Activated CD8-positive, alpha-beta memory T cell treated with anti-CD3 and anti-CD28 coated beads, Interleukin-2, amount 10 ng/mL, durations not matched to agents 7 days and 5 days (primary cell): ENCODE measurements at regions of chr1 and their contacts with region 1.

Region 1: DNA sequence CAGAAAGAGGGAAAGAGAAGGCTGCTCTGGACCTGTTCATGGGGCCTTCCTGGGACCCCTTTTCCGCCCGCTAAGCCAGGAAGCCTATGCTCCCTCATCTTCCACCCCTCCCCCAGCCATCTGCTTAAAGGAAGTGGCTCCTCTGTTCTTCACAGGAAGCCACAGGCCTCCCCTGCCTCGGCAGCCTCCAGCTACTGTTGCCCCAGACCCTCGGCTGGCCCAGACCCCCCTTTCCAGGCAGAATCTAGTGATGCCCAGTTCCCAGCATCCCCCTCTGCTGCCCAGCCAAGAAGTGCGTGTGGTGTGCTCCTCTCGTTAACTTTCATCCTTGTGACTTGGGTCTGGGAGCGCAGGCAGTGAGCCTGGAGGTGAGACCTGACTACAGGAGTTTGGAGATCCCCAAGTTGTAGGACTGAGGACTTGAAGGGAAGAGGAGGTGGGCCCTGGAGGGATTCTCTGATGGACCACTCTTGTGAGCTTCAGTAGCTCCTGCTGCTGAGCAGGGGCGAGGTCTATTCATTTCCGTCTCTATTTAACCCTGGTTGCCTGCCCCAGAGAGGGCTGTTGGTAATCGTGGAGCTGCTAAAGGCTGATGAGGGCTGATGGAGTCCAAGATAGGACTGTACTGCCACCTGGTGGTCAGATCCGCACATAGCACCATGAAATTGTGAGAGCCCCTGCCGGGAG is 9.1 kb downstream of the IFI6 start:
- DNase-seq: peak; percentile 93
- ATAC-seq: peak; percentile 80
- H3K4me3 Mint-ChIP-seq: peak overlapping the region; percentile 68
- H3K27ac Mint-ChIP-seq: peak overlapping the region; percentile 100
- H3K4me1 Mint-ChIP-seq: peaks cover 72% of the 10 kb centered on the region
- H3K27me3 Mint-ChIP-seq: no peaks in the 10 kb centered on the region

Region 2: DNA sequence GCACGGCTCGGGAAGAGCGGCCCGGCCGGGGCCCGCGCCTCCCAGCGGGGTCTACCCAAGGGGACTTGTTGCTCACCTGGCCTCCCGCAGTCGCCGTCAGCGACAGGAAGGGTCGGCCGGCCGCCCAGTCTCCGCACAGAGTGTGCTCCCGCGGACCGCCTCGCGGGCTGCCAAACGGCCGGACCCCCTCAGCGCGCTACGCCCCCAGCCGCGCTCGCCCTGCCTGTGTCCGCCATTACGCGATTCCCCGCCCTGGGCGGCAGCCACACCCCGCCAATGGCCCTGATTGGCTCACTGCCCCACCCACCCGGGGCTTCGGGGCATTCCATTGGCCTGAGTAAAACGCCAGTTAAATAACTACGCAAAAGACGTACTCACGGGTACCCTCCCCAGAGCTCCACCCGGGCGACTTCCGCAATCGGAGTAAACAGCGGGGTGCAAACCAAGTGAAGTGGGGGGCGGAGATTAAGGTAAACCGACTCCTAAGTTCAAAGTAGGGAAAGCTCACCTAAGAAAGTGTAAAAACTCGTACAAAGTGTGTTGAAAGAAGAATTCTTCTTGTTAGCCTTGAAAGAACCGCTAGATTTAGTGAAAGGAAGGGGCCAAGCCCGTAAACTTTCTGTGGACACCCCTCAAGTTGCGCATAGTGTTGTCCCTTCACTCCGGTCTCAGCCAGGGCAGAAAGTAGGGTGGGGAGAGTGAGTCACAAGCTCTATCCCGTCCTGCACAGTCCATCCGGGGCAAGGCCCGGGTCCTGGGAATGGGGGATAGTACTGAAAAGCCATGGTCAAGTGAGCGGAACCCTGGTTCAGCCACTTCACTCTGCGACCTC is 172.7 kb before region 1 on chr1 and contains the start of gene WASF2:
- CTCF ChIA-PET with region 1: interaction called, 15 read pairs
- DNase-seq: peak; percentile 98
- ATAC-seq: peak; percentile 93
- H3K4me3 Mint-ChIP-seq: peak within 1 kb of the TSS; percentile 96
- H3K27ac Mint-ChIP-seq: peak within 1 kb of the TSS; percentile 100
- H3K4me1 Mint-ChIP-seq: peaks cover 31% of the 10 kb centered on the region
- H3K27me3 Mint-ChIP-seq: no peaks in the 10 kb centered on the region
- total RNA-seq, gene WASF2: 113 to 117 TPM

Region 3: GRCh38 chr1:27588256-27589232 is 74.3 kb before region 1 on chr1:
- CTCF ChIA-PET with region 1: no interaction called
- DNase-seq: no peak
- ATAC-seq: no peak
- H3K4me3 Mint-ChIP-seq: no peak overlapping the region
- H3K27ac Mint-ChIP-seq: no peak overlapping the region
- H3K4me1 Mint-ChIP-seq: no peaks in the 10 kb centered on the region
- H3K27me3 Mint-ChIP-seq: no peaks in the 10 kb centered on the region

Region 4: GRCh38 chr1:27603681-27604578 is 58.9 kb before region 1 on chr1 and contains the start of gene AHDC1:
- CTCF ChIA-PET with region 1: interaction called, 536 read pairs
- DNase-seq: peak; percentile 93
- ATAC-seq: peak; percentile 90
- H3K4me3 Mint-ChIP-seq: peak within 1 kb of the TSS; percentile 94
- H3K27ac Mint-ChIP-seq: peak within 1 kb of the TSS; percentile 70
- H3K4me1 Mint-ChIP-seq: peaks cover 37% of the 10 kb centered on the region
- H3K27me3 Mint-ChIP-seq: no peaks in the 10 kb centered on the region
- total RNA-seq, gene AHDC1: 15.8 to 18.5 TPM

Region 5: DNA sequence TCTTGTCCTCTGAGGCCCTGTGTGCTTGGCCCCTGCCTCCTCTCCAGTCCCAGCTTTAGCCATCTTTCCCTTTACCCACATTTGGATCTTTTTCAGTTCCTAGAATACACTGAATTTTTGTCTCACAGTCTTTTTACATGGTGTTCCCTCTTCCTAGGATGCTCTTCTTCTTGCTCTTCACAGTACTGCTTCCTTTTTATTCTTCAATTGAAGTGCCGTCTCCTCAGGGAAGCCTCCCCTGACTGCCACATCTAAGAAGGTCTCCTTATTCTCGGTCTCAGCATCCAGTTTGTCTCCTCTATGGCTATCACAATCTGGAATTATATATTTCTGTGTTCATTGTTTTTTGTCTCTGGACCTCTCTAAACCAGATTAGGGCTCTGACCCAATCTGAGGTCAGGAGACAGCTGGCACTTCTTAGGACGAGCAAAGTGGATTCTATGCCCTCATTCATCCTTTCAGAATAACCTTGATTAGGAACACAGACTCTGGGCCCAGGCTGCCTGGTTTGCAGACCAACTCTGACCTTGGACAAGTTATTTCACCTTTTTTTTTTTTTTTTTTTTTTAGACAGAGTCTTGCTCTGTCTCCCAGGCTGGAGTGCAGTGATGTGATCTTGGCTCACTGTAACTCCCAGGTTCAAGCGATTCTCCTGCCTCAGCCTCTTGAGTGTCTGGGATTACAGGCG is 24.7 kb before region 1 on chr1:
- CTCF ChIA-PET with region 1: interaction called, 32 read pairs
- DNase-seq: no peak
- ATAC-seq: no peak
- H3K4me3 Mint-ChIP-seq: no peak overlapping the region
- H3K27ac Mint-ChIP-seq: no peak overlapping the region
- H3K4me1 Mint-ChIP-seq: peaks cover 37% of the 10 kb centered on the region
- H3K27me3 Mint-ChIP-seq: no peaks in the 10 kb centered on the region

Region 6: GRCh38 chr1:27650539-27651175 is 12.2 kb before region 1 on chr1:
- CTCF ChIA-PET with region 1: interaction called, 15 read pairs
- DNase-seq: no peak
- ATAC-seq: no peak
- H3K4me3 Mint-ChIP-seq: no peak overlapping the region
- H3K27ac Mint-ChIP-seq: no peak overlapping the region
- H3K4me1 Mint-ChIP-seq: peaks cover 13% of the 10 kb centered on the region
- H3K27me3 Mint-ChIP-seq: no peaks in the 10 kb centered on the region

Region 7: GRCh38 chr1:27689423-27690173 is 26.7 kb after region 1 on chr1:
- CTCF ChIA-PET with region 1: no interaction called
- DNase-seq: no peak
- ATAC-seq: peak; percentile 23
- H3K4me3 Mint-ChIP-seq: peak overlapping the region; percentile 5
- H3K27ac Mint-ChIP-seq: peak overlapping the region; percentile 8
- H3K4me1 Mint-ChIP-seq: peaks cover 16% of the 10 kb centered on the region
- H3K27me3 Mint-ChIP-seq: peaks cover 14% of the 10 kb centered on the region